ENCODE measurements at regions of chr17 and their contacts with region 1.

Region 1: DNA sequence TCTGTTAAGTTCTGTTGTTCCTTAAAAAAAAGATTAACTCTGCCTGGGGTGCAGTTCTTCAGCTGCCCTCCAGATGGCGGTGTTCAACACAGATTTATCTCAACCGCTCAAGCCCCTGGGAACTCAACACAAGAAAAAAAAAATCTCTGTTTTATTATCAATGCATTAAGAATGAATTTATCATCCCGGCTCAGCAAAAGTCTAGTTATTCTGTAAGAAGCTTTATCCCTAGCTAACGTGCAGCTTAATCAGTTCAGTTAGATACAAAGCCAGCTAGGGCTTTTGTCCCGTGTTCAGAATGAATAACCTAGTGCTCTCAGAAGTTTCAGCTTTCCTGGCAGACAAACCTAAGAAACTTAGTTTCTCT is 475.9 kb upstream of the CCL2 start:
- DNase-seq: peak in 2 of 3 donors; percentile 54 to 67
- ATAC-seq: no peak
- H3K4me3 ChIP-seq: no peak overlapping the region
- H3K27ac ChIP-seq: no peak overlapping the region
- H3K4me1 ChIP-seq: no peaks in the 10 kb centered on the region
- H3K27me3 ChIP-seq: no peaks in the 10 kb centered on the region

Region 2: GRCh38 chr17:33686171-33686570 is 93.0 kb before region 1 on chr17:
- intact Hi-C with region 1: no loop called
- DNase-seq: no peak
- ATAC-seq: no peak
- H3K4me3 ChIP-seq: no peak overlapping the region
- H3K27ac ChIP-seq: no peak overlapping the region
- H3K4me1 ChIP-seq: no peaks in the 10 kb centered on the region
- H3K27me3 ChIP-seq: peaks cover 4% of the 10 kb centered on the region

Region 3: GRCh38 chr17:34163646-34164045 is 384.4 kb after region 1 on chr17:
- intact Hi-C with region 1: loop called in 1 of 4 experiments (anchors 10 kb)
- DNase-seq: no peak
- ATAC-seq: peak in 1 of 2 donors; percentile 57
- H3K4me3 ChIP-seq: no peak overlapping the region
- H3K27ac ChIP-seq: no peak overlapping the region
- H3K4me1 ChIP-seq: no peaks in the 10 kb centered on the region
- H3K27me3 ChIP-seq: no peaks in the 10 kb centered on the region